MCF 10A (cell line): ENCODE measurements at regions of chr9 and their contacts with region 1.

Region 1: GRCh38 chr9:84315278-84315877 is 25.2 kb downstream of the SLC28A3 start:
- DNase-seq: peak; percentile 72
- H3K4me3 Mint-ChIP-seq: no peak overlapping the region
- H3K27ac Mint-ChIP-seq: no peak overlapping the region
- H3K4me1 Mint-ChIP-seq: peaks cover 23% of the 10 kb centered on the region
- H3K27me3 Mint-ChIP-seq: no peaks in the 10 kb centered on the region
- CTCF ChIP-seq: peak; percentile 79

Region 2: DNA sequence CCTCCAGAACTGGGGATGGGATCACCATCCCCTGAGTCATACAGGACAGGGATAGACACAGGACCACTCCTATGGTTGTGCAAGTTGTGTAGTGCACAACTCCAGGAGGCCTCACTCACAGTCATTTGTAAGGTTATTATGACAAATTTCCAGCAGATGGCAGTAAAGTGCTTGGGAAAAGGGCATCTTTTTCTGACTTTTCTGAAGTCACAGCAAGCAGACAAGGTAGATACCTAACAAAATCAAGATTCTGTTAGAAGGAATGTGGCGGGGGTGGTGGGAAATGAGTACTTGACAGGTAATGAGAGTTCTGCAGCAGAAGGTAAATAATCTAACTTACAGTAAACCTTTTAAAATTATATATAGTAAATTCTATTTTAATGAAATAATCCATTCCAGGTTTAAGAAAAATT is 377.5 kb before region 1 on chr9:
- CTCF ChIA-PET with region 1: interaction called, 12 read pairs
- POLR2A ChIA-PET with region 1: no interaction called
- intact Hi-C with region 1: loop called (anchors 1 kb)
- DNase-seq: peak; percentile 83
- H3K4me3 Mint-ChIP-seq: no peak overlapping the region
- H3K27ac Mint-ChIP-seq: no peak overlapping the region
- H3K4me1 Mint-ChIP-seq: peaks cover 41% of the 10 kb centered on the region
- H3K27me3 Mint-ChIP-seq: no peaks in the 10 kb centered on the region
- CTCF ChIP-seq: peak; percentile 67

Region 3: DNA sequence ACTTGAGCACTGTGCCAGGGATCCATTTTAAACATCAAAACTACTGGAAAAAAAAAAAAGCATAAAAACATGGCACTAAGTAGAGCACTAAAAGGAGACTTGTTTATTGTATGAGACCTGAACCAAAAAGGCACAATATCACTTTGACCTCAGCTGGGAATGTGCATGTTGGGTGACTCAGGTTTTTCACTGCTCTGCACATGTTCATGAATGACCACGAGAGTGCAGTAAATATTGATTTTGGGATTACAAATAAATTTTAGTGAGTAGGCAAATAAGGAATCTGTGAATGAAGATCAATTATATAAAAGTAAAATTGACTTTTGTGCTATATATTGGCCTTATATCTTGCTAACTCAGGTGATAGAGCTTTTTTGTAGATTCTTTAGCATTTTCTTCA is 323.0 kb before region 1 on chr9:
- CTCF ChIA-PET with region 1: interaction called, 6 read pairs
- POLR2A ChIA-PET with region 1: interaction called, 4 read pairs
- intact Hi-C with region 1: loop called (anchors 2 kb)
- DNase-seq: no peak
- H3K4me3 Mint-ChIP-seq: no peak overlapping the region
- H3K27ac Mint-ChIP-seq: no peak overlapping the region
- H3K4me1 Mint-ChIP-seq: peaks cover 11% of the 10 kb centered on the region
- H3K27me3 Mint-ChIP-seq: no peaks in the 10 kb centered on the region
- CTCF ChIP-seq: peak; percentile 20

Region 4: DNA sequence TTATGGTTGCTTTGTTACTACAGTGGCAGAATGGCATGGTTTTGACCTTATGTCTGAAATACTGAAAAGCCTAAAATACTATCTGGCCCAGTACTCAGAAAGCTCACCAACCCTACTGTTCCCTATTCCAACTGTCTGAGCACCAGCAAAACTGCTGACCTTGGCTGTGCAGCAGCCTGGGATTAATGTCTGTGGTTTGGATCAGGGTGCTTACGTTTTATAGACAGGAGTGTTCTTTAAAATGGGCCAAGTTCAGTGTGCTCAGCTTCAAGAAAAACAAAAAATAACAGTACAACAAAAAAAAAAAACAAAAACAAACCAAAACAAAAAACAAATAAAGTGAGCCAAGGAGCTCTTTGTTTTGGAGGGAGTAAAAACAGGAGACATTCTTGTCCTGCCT is 11.2 kb before region 1 on chr9:
- CTCF ChIA-PET with region 1: interaction called, 15 read pairs
- POLR2A ChIA-PET with region 1: no interaction called
- intact Hi-C with region 1: no loop called
- DNase-seq: no peak
- H3K4me3 Mint-ChIP-seq: no peak overlapping the region
- H3K27ac Mint-ChIP-seq: no peak overlapping the region
- H3K4me1 Mint-ChIP-seq: peaks cover 24% of the 10 kb centered on the region
- H3K27me3 Mint-ChIP-seq: no peaks in the 10 kb centered on the region
- CTCF ChIP-seq: no peak

Region 5: DNA sequence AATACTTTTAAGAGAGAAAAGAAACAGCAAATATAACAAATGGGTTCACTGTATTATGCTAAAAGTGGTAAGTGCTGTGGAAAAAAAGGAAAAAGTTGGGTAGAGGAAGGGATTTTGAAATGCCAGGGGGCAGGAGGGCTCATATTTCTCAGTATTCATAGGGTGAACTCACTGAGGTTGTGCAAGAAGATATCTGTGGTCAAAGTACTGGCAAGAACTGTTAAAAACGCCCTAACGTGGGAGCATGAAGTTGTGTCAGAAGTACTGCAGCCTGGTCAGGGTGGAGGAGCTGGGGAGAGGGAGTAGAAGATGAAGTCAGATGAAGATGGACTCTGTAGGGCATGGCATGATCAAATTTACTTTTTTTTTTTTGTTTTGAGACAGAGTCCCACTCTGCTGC is 56.4 kb after region 1 on chr9:
- CTCF ChIA-PET with region 1: interaction called, 10 read pairs
- POLR2A ChIA-PET with region 1: no interaction called
- intact Hi-C with region 1: no loop called
- DNase-seq: peak; percentile 97
- H3K4me3 Mint-ChIP-seq: peak overlapping the region; percentile 24
- H3K27ac Mint-ChIP-seq: peak overlapping the region; percentile 6
- H3K4me1 Mint-ChIP-seq: peaks cover 31% of the 10 kb centered on the region
- H3K27me3 Mint-ChIP-seq: no peaks in the 10 kb centered on the region
- CTCF ChIP-seq: no peak